Transverse colon (tissue), 4 donors: ENCODE measurements at regions of chr16 and their contacts with region 1.

Region 1: DNA sequence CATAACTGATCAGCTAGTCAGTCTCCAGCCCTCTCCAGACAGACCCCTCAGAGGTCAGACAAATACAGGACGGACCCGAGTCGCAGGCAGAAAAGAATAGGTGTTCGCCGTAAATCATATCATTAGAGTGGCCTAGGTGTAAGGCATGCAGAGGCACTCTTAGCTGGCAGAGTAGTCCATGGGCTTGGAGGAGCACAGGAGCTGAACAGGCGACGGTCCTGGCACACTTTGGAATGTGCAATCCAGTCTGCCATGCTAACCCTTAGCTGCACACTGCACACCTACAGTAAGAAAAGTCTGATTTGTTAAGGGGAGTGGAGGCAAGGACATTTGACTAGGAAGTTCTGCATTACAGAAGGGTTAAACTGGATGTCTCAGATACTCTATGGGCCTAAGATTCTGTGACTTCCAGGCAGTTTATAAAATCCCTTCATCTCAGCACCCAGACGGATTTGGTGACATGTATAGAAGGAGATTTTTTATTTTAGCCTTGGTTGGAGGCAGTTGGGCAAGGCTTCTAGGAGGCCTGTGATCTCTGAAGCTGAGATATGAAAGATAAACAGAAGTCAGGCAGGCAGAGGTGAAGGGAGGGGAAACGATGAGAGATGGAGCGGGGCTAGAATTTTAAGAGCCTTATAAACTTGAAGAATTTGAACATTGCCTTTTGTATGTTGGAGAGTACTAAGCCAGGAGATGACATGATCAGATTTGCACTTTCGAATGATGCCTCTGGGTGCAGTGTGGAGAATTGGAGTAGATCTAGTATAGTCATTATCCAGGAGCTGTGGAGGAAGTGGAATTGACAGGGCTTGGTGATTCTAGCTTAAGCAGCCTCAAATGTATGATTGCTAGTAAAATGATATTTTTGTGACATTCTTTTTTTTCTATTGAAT is 34.6 kb upstream of the SLC5A11 start:
- DNase-seq: no peak
- H3K4me3 ChIP-seq: no peak overlapping the region
- H3K27ac ChIP-seq: peak overlapping the region in 3 of 4 donors; percentile 20 to 48 (median 46)
- H3K4me1 ChIP-seq: peaks cover 0 to 16% (median 3%) of the 10 kb centered on the region in 4 donors
- H3K27me3 ChIP-seq: no peaks in the 10 kb centered on the region
- CTCF ChIP-seq: no peak
- EP300 ChIP-seq: no peak
- POLR2A ChIP-seq: no peak

Region 2: DNA sequence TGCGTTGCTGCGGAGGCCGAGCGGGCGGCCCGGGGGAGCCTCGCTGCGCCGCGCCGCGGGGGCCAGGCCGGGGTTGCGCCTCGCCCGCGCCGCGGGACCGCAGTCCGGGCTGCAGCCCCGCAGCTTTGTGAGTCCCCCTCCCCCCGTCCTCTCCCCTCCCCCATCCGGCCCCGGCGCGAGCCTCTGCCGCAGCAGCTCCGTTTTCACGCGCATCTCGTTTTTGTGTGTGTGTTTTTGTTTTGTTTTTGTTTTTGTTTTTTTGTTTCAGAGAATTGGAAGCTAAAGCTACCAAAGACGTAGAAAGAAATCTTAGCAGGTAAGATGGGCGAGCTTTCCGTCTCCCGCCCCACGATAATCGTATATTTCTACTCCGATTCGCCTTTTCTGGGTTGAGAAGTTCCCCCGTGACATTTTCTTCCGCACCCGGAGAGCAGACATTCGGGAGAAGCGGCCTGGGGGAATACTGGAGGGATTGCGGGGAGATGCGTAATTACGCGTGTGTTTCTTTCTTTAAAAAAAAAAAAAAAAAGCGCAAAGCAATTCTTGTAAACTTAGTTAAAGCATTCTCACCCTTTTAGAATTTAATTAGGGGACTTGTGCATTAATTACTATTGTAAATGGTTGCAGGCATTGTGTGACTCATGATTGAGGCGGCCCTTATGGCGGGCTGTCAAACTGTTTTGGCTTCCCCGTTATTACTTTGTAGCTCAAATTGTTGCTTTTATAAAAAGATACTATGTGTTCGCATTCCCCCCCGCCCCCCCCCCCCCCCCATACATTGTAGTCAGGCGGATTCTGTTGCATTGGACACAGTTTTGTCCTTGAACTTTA is 81.0 kb before region 1 on chr16:
- in situ Hi-C with region 1: no loop called
- intact Hi-C with region 1: loop called (anchors 10 kb)
- DNase-seq: peak; percentile 43
- H3K4me3 ChIP-seq: peak overlapping the region; percentile 54 to 95 (median 84)
- H3K27ac ChIP-seq: peak overlapping the region; percentile 95 to 97 (median 96)
- H3K4me1 ChIP-seq: peaks cover 3 to 50% (median 31%) of the 10 kb centered on the region in 4 donors
- H3K27me3 ChIP-seq: no peaks in the 10 kb centered on the region
- CTCF ChIP-seq: no peak
- EP300 ChIP-seq: no peak
- POLR2A ChIP-seq: no peak